ENCODE measurements at regions of chr17 and their contacts with region 1.

Region 1: GRCh38 chr17:49779739-49780231 is 8.7 kb upstream of the KAT7 start:
- DNase-seq: peak in 1 of 2 donors; percentile 75
- H3K4me3 ChIP-seq: no peak overlapping the region
- H3K27ac ChIP-seq: peak overlapping the region; percentile 81 to 87
- H3K4me1 ChIP-seq: peaks cover 29 to 59% of the 10 kb centered on the region in 2 donors
- H3K27me3 ChIP-seq: no peaks in the 10 kb centered on the region
- CTCF ChIP-seq: peak; percentile 48 to 72 (median 63)

Region 2: DNA sequence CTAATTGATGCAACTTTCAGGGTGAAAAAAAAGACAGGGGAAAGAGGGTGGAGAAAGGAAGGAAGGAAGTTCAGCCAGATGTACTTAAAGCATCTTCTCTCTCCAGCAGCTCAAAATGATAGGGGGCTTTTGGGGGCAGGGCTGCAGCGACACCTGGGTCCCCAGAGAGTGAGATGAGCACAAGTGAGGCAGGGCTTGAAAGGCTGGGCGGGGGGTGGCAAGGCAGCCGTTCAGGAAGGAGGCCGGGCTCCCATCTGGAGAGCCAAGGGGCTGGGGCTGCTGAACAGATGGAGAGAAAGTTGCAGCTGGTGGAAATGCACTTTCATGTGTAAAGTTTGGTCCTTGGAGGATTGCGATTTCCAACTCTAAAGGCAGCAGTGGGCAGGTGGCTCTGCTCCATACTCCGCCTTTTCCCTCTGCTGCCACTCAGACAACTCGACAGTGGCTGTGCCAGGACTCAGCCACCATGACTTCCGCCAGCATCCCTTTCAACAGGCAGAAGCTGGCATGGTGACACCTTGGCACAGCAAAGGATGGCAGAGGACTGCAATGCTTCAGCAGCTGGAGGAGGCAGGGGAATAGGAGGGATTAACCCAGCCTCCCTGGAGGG is 79.7 kb before region 1 on chr17:
- intact Hi-C with region 1: no loop called
- DNase-seq: no peak
- H3K4me3 ChIP-seq: no peak overlapping the region
- H3K27ac ChIP-seq: no peak overlapping the region
- H3K4me1 ChIP-seq: peaks cover 0 to 3% of the 10 kb centered on the region in 2 donors
- H3K27me3 ChIP-seq: no peaks in the 10 kb centered on the region
- CTCF ChIP-seq: no peak

Region 3: GRCh38 chr17:49739641-49740271 is 40.0 kb before region 1 on chr17:
- intact Hi-C with region 1: loop called (anchors 1 kb)
- DNase-seq: peak; percentile 61 to 85
- H3K4me3 ChIP-seq: no peak overlapping the region
- H3K27ac ChIP-seq: peak overlapping the region; percentile 89 to 94
- H3K4me1 ChIP-seq: peaks cover 21 to 46% of the 10 kb centered on the region in 2 donors
- H3K27me3 ChIP-seq: no peaks in the 10 kb centered on the region
- CTCF ChIP-seq: no peak

Region 4: GRCh38 chr17:49753959-49754391 is 25.8 kb before region 1 on chr17:
- intact Hi-C with region 1: no loop called
- DNase-seq: no peak
- H3K4me3 ChIP-seq: no peak overlapping the region
- H3K27ac ChIP-seq: no peak overlapping the region
- H3K4me1 ChIP-seq: no peaks in the 10 kb centered on the region
- H3K27me3 ChIP-seq: no peaks in the 10 kb centered on the region
- CTCF ChIP-seq: no peak